ENCODE measurements at regions of chr15 and their contacts with region 1.

Region 1: GRCh38 chr15:74322181-74323076 is 45.0 kb downstream of the CYP11A1 start:
- DNase-seq: peak; percentile 68 to 84
- ATAC-seq: peak; percentile 72 to 81 (median 75)
- H3K4me3 ChIP-seq: no peak overlapping the region
- H3K27ac ChIP-seq: no peak overlapping the region
- H3K4me1 ChIP-seq: peaks cover 5% of the 10 kb centered on the region
- H3K27me3 ChIP-seq: no peaks in the 10 kb centered on the region
- CTCF ChIP-seq: peak; percentile 84

Region 2: DNA sequence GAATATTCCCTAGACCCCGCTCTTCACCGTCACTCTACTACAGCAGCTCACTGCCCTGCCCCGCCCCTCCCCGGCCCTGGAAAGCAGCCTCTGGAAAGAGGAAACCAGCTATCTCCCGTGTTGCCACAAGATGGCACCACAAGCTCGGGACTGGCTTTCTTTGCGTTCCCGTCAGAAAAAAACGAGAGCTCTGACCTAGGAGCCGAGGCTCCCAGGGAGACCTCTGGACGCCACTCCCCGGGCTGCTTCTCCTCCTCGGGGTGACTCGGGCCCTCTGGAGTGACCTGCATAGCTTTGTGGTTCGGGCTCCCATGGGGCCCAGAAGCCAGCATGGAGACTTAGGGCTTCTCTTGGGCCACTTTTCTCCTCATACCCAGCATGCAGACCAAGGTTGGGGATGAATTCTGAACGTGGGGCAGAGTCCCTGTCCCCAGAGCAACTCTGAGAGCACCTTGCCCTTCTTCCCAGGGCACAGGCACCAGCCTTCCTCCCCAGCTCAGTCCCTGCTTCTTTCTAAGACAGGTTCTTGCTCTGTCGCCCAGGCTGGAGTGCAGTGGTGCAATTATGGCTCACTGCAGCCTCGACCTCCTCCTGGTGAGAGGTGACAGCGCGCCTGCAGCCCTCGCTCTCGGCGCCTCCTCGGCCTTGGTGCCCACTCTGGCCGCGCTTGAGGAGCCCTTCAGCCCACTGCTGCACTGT is 349.3 kb before region 1 on chr15:
- intact Hi-C with region 1: loop called (anchors 5 to 10 kb)
- DNase-seq: peak; percentile 86 to 90
- ATAC-seq: peak; percentile 90 to 98 (median 94)
- H3K4me3 ChIP-seq: peak overlapping the region; percentile 32
- H3K27ac ChIP-seq: no peak overlapping the region
- H3K4me1 ChIP-seq: no peaks in the 10 kb centered on the region
- H3K27me3 ChIP-seq: no peaks in the 10 kb centered on the region
- CTCF ChIP-seq: peak; percentile 77

Region 3: DNA sequence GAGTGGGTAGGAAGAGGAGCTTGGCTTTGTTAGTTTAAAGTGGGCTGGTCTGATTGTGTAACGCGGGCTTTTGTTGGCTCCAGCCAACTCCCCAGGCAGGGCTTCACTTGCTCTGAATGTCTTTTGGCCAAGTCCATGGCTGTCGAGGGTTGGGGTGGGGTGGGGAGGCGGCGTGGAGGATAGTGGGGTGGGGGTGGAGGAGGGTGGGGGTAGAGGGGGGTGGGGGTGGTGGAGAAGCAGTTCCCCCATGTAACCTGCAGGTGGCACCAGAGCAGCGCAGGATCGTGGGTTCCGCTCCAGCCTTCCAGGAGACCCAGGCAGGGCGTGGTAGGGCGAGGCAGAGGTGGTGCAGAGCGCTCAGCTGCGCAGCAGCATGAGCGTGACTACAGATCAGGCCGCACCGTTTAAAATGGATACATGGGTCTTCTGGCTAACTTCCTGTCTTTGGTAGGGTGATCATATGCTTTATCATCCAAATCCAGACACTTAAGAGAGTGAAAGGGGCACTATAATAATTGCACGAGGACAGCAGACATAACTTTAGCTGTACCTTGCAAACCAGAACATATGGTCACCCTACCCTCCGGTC is 268.4 kb before region 1 on chr15:
- intact Hi-C with region 1: loop called in 1 of 2 experiments (anchors 5 kb)
- DNase-seq: peak; percentile 82 to 87
- ATAC-seq: peak; percentile 73 to 87 (median 82)
- H3K4me3 ChIP-seq: no peak overlapping the region
- H3K27ac ChIP-seq: no peak overlapping the region
- H3K4me1 ChIP-seq: peaks cover 5% of the 10 kb centered on the region
- H3K27me3 ChIP-seq: no peaks in the 10 kb centered on the region
- CTCF ChIP-seq: peak; percentile 41

Region 4: DNA sequence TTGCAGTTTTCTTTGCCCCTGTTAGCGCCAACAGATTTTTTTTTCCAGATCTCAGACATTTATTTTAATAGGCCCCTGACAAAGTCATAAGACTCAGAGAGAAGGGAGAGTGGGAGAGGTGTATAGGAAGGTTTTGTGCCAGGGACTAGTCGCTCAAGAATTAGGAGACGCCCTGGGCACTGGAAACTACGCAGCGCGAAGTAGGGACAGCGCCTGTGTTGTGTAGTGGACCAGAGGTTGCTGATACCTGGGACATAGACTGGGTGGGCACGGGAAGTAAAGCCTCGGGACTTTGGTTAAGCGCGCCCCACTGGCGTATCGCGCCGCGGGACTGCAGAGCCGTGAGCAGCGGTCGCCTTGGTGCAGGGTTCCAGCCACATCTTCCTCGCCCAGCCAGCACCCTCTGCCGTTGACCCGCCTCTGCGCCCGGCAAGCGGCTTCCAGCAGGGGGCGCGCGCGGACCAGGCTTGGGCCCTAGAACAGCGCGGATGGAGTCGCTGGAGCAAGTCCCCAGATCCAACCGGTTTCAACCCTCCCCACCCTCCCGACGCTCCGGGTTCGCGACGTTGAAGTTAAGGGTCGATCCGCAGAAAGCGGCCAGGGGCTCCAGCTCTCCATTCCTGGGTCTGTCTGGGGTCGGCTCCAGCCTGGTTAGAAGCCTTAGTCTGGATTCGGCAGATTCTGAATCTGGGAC is 195.0 kb before region 1 on chr15:
- intact Hi-C with region 1: loop called (anchors 1 to 5 kb)
- DNase-seq: peak; percentile 91 to 92
- ATAC-seq: peak; percentile 93 to 96 (median 96)
- H3K4me3 ChIP-seq: peak overlapping the region; percentile 56
- H3K27ac ChIP-seq: no peak overlapping the region
- H3K4me1 ChIP-seq: peaks cover 4% of the 10 kb centered on the region
- H3K27me3 ChIP-seq: peaks cover 0 to 72% (median 37%) of the 10 kb centered on the region in 3 donors
- CTCF ChIP-seq: peak; percentile 99

Region 5: GRCh38 chr15:74540761-74541493 is 218.5 kb after region 1 on chr15 and contains the start of gene ARID3B:
- intact Hi-C with region 1: no loop called
- DNase-seq: peak; percentile 98 to 99
- ATAC-seq: peak; percentile 96 to 98 (median 98)
- H3K4me3 ChIP-seq: peak within 1 kb of the TSS; percentile 93
- H3K27ac ChIP-seq: peak within 1 kb of the TSS; percentile 85
- H3K4me1 ChIP-seq: peaks cover 23% of the 10 kb centered on the region
- H3K27me3 ChIP-seq: no peaks in the 10 kb centered on the region
- CTCF ChIP-seq: no peak
- total RNA-seq, gene ARID3B: 1.8 to 4.7 (median 2.9) TPM

Measured in psoas muscle (tissue), 8 donors.